Ovary (tissue), 10 donors: ENCODE measurements at regions of chr11 and their contacts with region 1.

Region 1: GRCh38 chr11:67118801-67119584 is at the start of gene KDM2A:
- DNase-seq: peak; percentile 99 to 100 (median 99)
- H3K4me3 ChIP-seq: peak within 1 kb of the TSS; percentile 98
- H3K27ac ChIP-seq: peak within 1 kb of the TSS; percentile 98
- H3K4me1 ChIP-seq: peaks cover 3% of the 10 kb centered on the region
- H3K27me3 ChIP-seq: no peaks in the 10 kb centered on the region
- CTCF ChIP-seq: no peak
- EP300 ChIP-seq: no peak
- POLR2A ChIP-seq: peak; percentile 61
- total RNA-seq, gene KDM2A: 33.5 to 76.9 (median 59.9) TPM

Region 2: DNA sequence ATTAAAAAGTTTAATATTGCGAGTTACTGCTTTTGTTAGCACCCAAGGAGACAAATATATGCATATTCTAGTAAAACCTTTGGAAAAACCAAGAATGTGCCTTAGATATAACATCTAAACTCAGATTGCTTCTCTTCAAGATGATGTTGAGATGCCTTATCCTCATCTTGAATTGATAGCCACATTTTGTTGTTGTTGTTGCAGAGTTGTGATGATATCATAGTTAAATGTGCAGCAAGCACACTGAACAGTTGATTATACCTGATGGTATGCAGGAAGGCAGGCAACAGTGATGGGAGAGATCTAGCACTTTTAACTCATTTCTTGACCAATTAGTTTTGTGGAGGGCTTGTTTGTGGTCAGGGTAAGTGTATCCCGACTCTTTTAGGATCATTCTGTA is 48.1 kb after region 1 on chr11:
- intact Hi-C with region 1: loop called in 1 of 4 experiments (anchors 5 kb)
- DNase-seq: no peak
- H3K4me3 ChIP-seq: no peak overlapping the region
- H3K27ac ChIP-seq: no peak overlapping the region
- H3K4me1 ChIP-seq: peaks cover 4% of the 10 kb centered on the region
- H3K27me3 ChIP-seq: no peaks in the 10 kb centered on the region
- CTCF ChIP-seq: no peak
- EP300 ChIP-seq: no peak
- POLR2A ChIP-seq: no peak

Region 3: GRCh38 chr11:67265633-67266423 is 146.8 kb after region 1 on chr11:
- intact Hi-C with region 1: no loop called
- DNase-seq: peak; percentile 70 to 90 (median 82)
- H3K4me3 ChIP-seq: peak overlapping the region; percentile 16
- H3K27ac ChIP-seq: peak overlapping the region; percentile 67 to 72
- H3K4me1 ChIP-seq: peaks cover 25% of the 10 kb centered on the region
- H3K27me3 ChIP-seq: no peaks in the 10 kb centered on the region
- CTCF ChIP-seq: peak; percentile 59 to 93 (median 91)
- EP300 ChIP-seq: no peak
- POLR2A ChIP-seq: no peak